ENCODE measurements at regions of chr5 and their contacts with region 1.

Region 1: GRCh38 chr5:108727651-108728565 is 19.8 kb upstream of the FER start:
- DNase-seq: peak; percentile 93
- ATAC-seq: peak; percentile 100

Region 2: DNA sequence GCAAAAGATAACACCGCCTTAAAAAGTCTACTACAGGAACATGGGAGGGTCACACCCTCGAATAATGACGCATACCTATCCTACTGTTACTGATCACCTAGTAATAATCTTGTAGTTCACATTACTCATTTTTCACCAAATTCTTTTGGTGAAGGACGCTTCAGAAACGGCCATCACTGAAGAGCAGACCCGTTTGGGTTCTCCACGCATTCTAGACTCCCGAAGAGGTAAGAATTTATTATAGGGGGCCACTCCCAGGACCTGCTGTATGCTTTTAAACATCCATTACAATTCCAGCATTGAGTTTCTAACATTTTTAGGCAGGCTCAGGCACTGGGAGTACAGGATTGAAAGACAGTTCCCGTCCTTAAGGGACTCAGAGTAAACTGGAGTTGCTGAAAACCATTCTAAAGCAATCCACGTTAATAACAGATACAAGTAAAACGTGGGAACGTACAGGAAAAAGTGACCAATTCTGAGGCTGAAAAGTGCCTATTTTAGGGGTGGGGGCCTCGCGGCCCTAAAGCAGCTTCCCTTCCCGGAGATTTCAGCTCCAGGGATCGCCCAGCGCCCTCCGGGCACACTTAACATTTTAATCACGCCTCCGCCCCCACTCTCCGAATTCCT is 20.0 kb after region 1 on chr5 and contains the start of gene FER:
- intact Hi-C with region 1: loop called in 1 of 2 experiments (anchors 1 kb)
- DNase-seq: no peak
- ATAC-seq: peak; percentile 17 to 68
- total RNA-seq, gene FER: 17.6 to 19.0 TPM